Transverse colon (tissue), 4 donors: ENCODE measurements at regions of chr12 and their contacts with region 1.

Region 1: DNA sequence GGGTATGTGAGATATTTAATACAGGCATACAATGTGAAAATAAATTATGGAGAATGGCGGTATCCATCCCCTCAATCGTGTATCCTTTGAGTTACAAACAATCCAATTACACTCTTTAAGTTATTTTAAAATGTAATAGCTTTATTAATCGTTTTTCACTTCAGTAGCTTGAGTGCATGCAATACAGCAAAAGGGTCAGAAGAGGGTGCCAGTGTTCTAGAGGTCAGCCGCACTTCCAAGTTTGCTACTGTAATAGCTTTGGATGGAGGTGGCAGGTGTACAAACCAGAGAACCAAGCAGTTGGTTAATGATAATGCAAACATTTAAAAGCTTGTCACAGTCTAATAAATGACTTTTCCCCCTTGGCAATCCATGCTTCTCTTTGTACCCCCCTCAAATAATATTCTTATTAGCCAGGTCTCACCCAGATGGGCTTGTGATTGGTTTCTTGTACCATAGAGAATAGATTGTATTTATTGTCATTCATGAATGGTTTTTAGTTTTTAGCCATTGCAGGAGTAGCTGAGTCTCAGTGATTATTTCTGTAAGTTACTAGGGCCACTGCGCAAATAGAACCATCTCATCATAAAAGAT is 127.0 kb downstream of the ERC1 start:
- DNase-seq: peak; percentile 78
- H3K4me3 ChIP-seq: no peak overlapping the region
- H3K27ac ChIP-seq: no peak overlapping the region
- H3K4me1 ChIP-seq: peaks cover 0 to 7% (median 3%) of the 10 kb centered on the region in 4 donors
- H3K27me3 ChIP-seq: no peaks in the 10 kb centered on the region
- CTCF ChIP-seq: peak; percentile 92 to 97 (median 95)
- EP300 ChIP-seq: no peak
- POLR2A ChIP-seq: no peak

Region 2: GRCh38 chr12:1553987-1554982 is 436.2 kb after region 1 on chr12:
- in situ Hi-C with region 1: loop called in 1 of 4 experiments (anchors 25 kb)
- intact Hi-C with region 1: no loop called
- DNase-seq: peak; percentile 50
- H3K4me3 ChIP-seq: no peak overlapping the region
- H3K27ac ChIP-seq: peak overlapping the region in 3 of 4 donors; percentile 13 to 55 (median 27)
- H3K4me1 ChIP-seq: peaks cover 0 to 3% (median 0%) of the 10 kb centered on the region in 4 donors
- H3K27me3 ChIP-seq: no peaks in the 10 kb centered on the region
- CTCF ChIP-seq: no peak
- EP300 ChIP-seq: no peak
- POLR2A ChIP-seq: no peak

Region 3: DNA sequence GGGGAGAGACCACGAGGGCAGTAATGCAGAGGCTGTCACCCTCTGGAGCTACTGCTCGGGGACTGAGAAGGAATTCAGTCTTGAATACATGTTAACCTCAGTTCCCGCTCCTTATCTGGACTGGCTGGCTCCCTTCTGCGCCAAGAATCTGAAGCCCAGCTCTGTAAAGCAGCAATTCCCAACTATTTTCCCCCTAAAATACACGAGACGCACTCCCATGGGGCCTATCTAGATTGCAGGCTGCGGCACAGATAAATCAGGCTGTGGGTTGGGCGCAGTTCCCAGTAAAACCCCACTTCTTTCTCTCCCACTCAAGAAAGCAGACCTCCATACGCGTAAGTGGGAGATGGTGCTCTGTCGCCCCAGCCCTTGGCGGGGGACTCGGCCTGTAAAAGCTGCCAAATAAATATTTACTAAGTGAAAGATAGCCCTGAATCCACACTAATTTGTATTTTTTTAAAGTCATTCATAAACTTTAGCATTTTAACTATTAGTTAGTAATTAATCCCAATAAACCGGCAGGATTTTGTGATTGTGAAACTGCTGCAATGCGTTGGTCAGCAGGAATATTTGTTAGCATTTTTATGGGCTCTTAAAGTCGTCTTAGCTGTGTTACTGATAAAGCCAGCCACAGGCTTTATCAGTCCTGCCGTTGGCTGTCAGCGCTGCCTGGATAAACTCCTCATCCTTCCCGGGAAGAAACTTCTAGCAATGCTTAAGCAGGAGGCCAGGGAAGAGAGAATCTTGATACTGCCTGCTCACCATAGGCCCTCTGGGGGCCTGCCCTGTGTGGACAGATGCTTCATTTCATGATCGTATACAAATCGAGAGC is 458.6 kb after region 1 on chr12:
- in situ Hi-C with region 1: loop called in 3 of 4 experiments (anchors 10 to 25 kb)
- intact Hi-C with region 1: loop called (anchors 5 kb)
- DNase-seq: no peak
- H3K4me3 ChIP-seq: peak overlapping the region in 1 of 4 donors; percentile 2
- H3K27ac ChIP-seq: peak overlapping the region; percentile 34 to 65 (median 60)
- H3K4me1 ChIP-seq: peaks cover 0 to 45% (median 30%) of the 10 kb centered on the region in 4 donors
- H3K27me3 ChIP-seq: no peaks in the 10 kb centered on the region
- CTCF ChIP-seq: no peak
- EP300 ChIP-seq: no peak
- POLR2A ChIP-seq: no peak

Region 4: DNA sequence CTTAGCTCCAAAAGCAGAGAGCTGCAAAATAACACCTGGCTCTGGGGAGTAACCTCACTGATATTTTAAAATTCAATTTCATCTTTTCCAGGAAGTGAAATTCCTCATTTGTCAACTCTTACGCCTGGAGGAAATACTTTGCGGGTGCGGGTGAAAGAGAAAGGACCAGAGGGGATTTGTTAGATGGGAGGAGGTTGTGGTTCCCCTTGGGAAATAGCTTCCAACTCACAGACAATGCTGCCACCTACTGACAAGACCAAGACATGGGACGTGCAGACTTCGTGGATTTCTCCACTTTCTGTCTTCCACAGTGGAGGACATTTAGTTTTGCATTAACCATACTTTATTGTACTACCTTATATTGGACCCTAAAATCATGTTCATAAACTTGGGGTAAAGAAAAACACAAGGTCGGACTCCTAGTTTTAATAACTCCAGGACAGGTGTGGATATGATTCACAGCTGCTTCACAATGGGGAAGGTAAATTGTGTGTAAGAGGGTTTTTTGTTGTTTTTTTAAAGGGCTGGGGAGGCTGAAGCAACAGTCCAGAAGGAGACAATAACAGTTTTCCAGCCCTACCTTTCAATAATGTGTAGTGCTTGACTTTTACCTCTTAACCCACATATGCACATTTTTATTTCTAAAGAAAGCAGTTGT is 465.5 kb after region 1 on chr12:
- in situ Hi-C with region 1: loop called in 3 of 4 experiments (anchors 5 to 25 kb)
- intact Hi-C with region 1: loop called (anchors 5 kb)
- DNase-seq: peak; percentile 85
- H3K4me3 ChIP-seq: no peak overlapping the region
- H3K27ac ChIP-seq: peak overlapping the region; percentile 5 to 56 (median 49)
- H3K4me1 ChIP-seq: peaks cover 12 to 42% (median 29%) of the 10 kb centered on the region in 4 donors
- H3K27me3 ChIP-seq: no peaks in the 10 kb centered on the region
- CTCF ChIP-seq: peak; percentile 86 to 96 (median 86)
- EP300 ChIP-seq: no peak
- POLR2A ChIP-seq: no peak

Region 5: GRCh38 chr12:1594261-1595025 is 476.4 kb after region 1 on chr12 and contains the start of gene FBXL14:
- in situ Hi-C with region 1: loop called in 2 of 4 experiments (anchors 5 to 25 kb)
- intact Hi-C with region 1: no loop called
- DNase-seq: peak; percentile 92
- H3K4me3 ChIP-seq: peak within 1 kb of the TSS; percentile 66 to 79 (median 76)
- H3K27ac ChIP-seq: peak within 1 kb of the TSS; percentile 95 to 99 (median 95)
- H3K4me1 ChIP-seq: peaks cover 0 to 66% (median 53%) of the 10 kb centered on the region in 4 donors
- H3K27me3 ChIP-seq: no peaks in the 10 kb centered on the region
- CTCF ChIP-seq: no peak
- EP300 ChIP-seq: no peak
- POLR2A ChIP-seq: peak; percentile 31
- total RNA-seq, gene FBXL14: 15.5 to 44.4 (median 28.0) TPM

Region 6: DNA sequence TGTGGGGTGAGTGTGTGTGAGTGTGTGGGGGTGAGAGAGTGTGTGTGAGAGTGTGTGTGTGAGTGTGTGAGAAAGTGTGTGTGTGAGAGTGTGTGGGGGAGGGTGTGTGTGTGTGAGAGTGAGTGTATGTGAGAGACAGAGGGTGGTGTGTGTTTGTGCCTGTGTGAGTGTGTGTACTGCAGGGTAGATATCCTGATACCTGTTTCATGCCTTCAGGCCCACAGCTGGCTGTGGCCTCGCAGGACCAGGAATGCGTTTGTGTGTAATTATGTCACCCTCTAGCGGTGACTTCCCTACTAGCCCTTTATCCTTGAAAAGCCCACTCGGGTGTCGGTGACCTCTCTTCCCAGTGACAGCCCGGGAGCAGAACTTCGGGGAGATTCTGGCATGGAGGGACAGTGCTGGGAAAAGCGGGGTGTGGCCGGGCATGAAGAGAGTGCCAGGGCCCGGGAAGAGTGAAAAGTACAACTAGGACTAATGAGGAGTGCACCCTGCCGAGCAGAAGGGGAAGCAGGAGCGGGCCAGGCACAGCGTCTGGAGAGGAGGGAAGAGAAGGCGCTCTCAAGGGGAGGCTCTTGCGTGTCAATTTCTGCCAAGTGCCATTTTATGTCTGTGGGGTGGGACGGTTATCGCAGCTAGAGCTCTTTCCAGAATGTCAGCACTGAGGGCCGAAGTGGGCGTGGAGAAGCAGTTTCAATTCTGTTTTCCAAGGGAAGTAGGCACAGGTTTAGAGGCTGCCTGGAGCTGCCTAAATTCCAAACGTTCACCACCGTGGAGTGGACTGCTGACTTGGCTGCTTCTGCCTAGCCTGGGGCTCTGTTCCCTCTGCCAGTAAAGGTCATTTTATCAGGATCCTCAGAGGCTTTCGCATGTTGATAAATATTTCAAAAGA is 487.3 kb after region 1 on chr12:
- in situ Hi-C with region 1: loop called in 1 of 4 experiments (anchors 10 kb)
- intact Hi-C with region 1: no loop called
- DNase-seq: peak; percentile 77
- H3K4me3 ChIP-seq: peak overlapping the region in 3 of 4 donors; percentile 28 to 50 (median 28)
- H3K27ac ChIP-seq: peak overlapping the region; percentile 86 to 90 (median 88)
- H3K4me1 ChIP-seq: peaks cover 13 to 54% (median 20%) of the 10 kb centered on the region in 4 donors
- H3K27me3 ChIP-seq: no peaks in the 10 kb centered on the region
- CTCF ChIP-seq: peak; percentile 72 to 94 (median 78)
- EP300 ChIP-seq: no peak
- POLR2A ChIP-seq: no peak